Aorta (tissue), 5 donors: ENCODE measurements at regions of chr15 and their contacts with region 1.

Region 1: DNA sequence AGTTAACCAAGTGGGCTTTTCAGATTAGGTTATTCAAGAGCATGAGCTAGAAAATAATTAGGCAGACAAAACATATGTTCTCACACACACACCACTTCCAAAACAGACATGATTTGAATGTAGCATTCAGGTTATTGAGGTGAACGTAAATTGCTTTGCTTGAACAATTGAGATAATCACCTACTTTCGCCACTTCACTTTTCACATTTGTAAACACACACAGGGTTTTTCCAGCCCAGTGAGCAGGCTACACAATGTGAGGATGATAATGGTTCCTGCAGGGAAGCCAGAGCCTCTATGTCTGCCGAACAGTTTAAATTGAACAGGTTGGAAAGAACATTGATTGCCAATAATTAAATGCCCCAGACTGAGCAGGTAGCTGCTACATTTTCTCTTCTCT is 560.8 kb downstream of the OCA2 start:
- DNase-seq: no peak
- ATAC-seq: no peak
- H3K4me3 ChIP-seq: no peak overlapping the region
- H3K27ac ChIP-seq: no peak overlapping the region
- H3K4me1 ChIP-seq: no peaks in the 10 kb centered on the region
- H3K27me3 ChIP-seq: no peaks in the 10 kb centered on the region

Region 2: GRCh38 chr15:27479296-27480140 is 58.8 kb before region 1 on chr15:
- intact Hi-C with region 1: loop called in 1 of 2 experiments (anchors 10 kb)
- DNase-seq: no peak
- ATAC-seq: no peak
- H3K4me3 ChIP-seq: no peak overlapping the region
- H3K27ac ChIP-seq: no peak overlapping the region
- H3K4me1 ChIP-seq: peaks cover 0 to 1% of the 10 kb centered on the region in 2 donors
- H3K27me3 ChIP-seq: no peaks in the 10 kb centered on the region